ENCODE measurements at regions of chr4 and their contacts with region 1.

Region 1: GRCh38 chr4:110631584-110632505 is 9.0 kb upstream of the PITX2 start:
- DNase-seq: peak; percentile 65
- H3K4me3 Mint-ChIP-seq: peak overlapping the region; percentile 3
- H3K27ac Mint-ChIP-seq: peak overlapping the region; percentile 0
- H3K4me1 Mint-ChIP-seq: peaks cover 22% of the 10 kb centered on the region
- H3K27me3 Mint-ChIP-seq: peaks cover 82% of the 10 kb centered on the region

Region 2: GRCh38 chr4:109631532-109632108 is 1000.2 kb before region 1 on chr4:
- CTCF ChIA-PET with region 1: no interaction called
- intact Hi-C with region 1: no loop called
- DNase-seq: no peak
- H3K4me3 Mint-ChIP-seq: peak overlapping the region; percentile 5
- H3K27ac Mint-ChIP-seq: peak overlapping the region; percentile 69
- H3K4me1 Mint-ChIP-seq: peaks cover 56% of the 10 kb centered on the region
- H3K27me3 Mint-ChIP-seq: no peaks in the 10 kb centered on the region

Region 3: DNA sequence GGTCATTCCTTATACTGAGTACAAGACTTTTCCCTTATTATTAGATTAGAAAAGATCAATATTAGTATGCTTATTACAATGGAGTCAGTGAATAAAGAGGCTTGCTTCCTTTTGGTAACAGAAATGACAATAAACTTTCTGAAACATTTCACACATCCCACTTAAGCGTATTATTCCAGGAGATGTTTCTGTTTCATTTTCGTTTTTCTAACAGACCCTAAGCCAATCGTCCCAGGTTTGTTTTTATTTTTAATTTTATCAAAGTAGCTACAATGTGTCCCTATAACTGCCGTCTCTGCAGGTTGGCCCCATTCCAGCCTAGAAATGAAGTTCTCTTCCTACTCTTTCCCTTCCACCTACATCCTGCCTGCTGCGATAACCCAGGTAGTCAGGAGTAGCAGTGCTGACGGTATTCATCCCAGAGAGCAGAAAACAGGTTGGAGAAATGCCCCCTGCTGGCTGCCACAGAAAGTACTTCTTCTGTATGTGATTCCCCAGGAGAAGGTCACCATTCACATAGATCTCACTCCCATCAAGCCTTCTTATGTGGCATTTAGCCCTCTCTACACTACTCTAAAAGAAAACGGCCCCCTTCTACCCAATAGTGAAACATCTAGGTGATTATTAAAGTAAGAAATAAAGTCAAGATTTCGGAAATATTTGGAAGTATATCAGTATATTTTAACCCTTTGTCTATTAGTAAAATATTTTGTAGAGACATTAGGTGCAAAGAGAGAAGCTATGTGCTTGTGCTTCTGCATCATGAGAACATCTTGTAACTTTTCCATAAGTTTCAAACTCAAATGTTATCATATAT is 115.5 kb before region 1 on chr4:
- CTCF ChIA-PET with region 1: no interaction called
- intact Hi-C with region 1: no loop called
- DNase-seq: peak; percentile 76
- H3K4me3 Mint-ChIP-seq: peak overlapping the region; percentile 79
- H3K27ac Mint-ChIP-seq: no peak overlapping the region
- H3K4me1 Mint-ChIP-seq: peaks cover 9% of the 10 kb centered on the region
- H3K27me3 Mint-ChIP-seq: no peaks in the 10 kb centered on the region

Region 4: DNA sequence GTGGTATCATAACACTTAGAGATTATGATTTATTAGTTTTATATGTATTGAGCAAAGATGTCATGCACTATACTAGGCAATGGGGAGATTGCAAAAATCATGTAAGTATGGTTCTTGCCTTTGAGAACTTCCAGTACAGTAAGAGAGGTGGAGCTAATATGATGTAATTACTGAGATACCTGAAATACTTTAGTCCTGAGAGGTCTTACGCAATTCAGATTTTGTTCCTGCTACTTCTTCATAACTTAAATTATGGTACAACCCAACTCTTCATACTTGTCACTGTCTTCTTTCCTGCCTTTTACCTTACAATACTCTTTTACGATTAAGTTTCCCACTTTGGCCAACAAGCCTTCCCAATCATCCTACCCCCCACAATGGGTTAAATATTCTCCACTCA is 555.3 kb after region 1 on chr4:
- CTCF ChIA-PET with region 1: no interaction called
- intact Hi-C with region 1: no loop called
- DNase-seq: no peak
- H3K4me3 Mint-ChIP-seq: no peak overlapping the region
- H3K27ac Mint-ChIP-seq: no peak overlapping the region
- H3K4me1 Mint-ChIP-seq: no peaks in the 10 kb centered on the region
- H3K27me3 Mint-ChIP-seq: no peaks in the 10 kb centered on the region

Region 5: DNA sequence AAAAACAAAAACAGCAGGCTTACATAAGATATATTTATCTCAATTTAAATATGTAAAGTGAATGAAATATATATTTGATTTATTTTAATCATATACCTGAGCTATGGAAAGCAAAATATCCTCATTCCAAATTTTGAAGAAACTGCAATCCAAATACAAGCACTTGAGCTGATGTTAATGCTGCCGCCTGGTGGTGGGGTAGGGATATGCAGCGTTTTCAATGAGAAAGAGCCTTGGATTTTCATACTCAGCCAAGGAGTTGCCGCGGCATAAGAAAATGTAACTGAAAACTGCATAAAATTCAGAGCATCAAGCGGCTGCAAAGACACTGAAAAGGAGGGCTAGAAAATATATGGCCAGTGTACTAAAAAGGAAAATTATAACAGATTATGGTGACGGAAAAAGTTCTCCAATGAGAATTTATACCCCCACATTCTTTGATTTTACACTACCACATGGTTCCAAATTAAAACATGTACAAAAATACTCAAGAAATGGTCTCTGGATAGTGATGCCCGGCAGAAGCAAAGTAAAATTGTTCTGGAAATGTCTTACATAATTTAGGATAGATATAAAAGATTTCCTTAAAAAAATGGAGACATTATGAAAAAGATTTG is 651.3 kb after region 1 on chr4:
- CTCF ChIA-PET with region 1: no interaction called
- intact Hi-C with region 1: loop called (anchors 1 kb)
- DNase-seq: peak; percentile 64
- H3K4me3 Mint-ChIP-seq: no peak overlapping the region
- H3K27ac Mint-ChIP-seq: no peak overlapping the region
- H3K4me1 Mint-ChIP-seq: no peaks in the 10 kb centered on the region
- H3K27me3 Mint-ChIP-seq: no peaks in the 10 kb centered on the region

Region 6: DNA sequence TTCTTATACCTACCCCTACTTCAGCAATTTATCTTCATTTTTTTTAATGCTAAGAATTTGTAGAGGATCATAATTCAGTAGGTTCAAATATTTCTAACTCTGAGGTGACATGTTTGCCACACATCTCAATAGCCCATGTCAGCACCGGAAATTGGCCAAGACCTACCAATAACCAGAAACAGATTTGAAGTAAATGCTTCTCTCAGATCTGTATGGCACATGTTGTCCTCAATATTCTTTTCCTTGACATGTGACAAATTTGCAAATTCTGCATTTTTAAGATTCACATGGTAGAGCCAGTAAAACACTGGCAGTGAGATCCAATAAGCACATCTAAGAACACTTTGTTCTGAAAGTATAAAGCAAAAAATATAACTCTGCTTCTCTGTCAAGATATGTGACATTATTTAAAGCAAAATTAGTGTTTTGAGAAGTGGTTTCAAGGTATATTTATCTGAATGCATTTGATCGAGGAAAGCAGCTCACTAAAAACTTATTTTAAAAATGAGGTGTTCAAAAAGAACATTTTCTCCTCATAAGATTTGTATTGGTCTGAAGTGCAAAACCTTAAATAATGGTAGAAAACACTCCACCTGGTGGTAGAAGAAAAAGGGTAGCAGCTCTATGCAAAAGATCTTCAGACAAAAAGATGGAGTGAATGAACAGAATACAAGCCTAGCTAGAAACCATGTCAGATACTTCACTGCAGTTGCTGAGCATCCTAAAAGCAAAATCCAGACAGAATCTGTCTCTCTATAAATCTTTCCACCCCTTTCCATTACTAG is 999.6 kb after region 1 on chr4:
- CTCF ChIA-PET with region 1: no interaction called
- intact Hi-C with region 1: loop called (anchors 2 kb)
- DNase-seq: no peak
- H3K4me3 Mint-ChIP-seq: no peak overlapping the region
- H3K27ac Mint-ChIP-seq: no peak overlapping the region
- H3K4me1 Mint-ChIP-seq: no peaks in the 10 kb centered on the region
- H3K27me3 Mint-ChIP-seq: no peaks in the 10 kb centered on the region

Region 7: GRCh38 chr4:111854494-111855087 is 1222.7 kb after region 1 on chr4:
- CTCF ChIA-PET with region 1: no interaction called
- intact Hi-C with region 1: loop called (anchors 2 kb)
- DNase-seq: peak; percentile 40
- H3K4me3 Mint-ChIP-seq: no peak overlapping the region
- H3K27ac Mint-ChIP-seq: no peak overlapping the region
- H3K4me1 Mint-ChIP-seq: no peaks in the 10 kb centered on the region
- H3K27me3 Mint-ChIP-seq: no peaks in the 10 kb centered on the region

Region 8: GRCh38 chr4:112031712-112032328 is 1400.0 kb after region 1 on chr4:
- CTCF ChIA-PET with region 1: no interaction called
- intact Hi-C with region 1: loop called (anchors 5 kb)
- DNase-seq: peak; percentile 13
- H3K4me3 Mint-ChIP-seq: no peak overlapping the region
- H3K27ac Mint-ChIP-seq: no peak overlapping the region
- H3K4me1 Mint-ChIP-seq: no peaks in the 10 kb centered on the region
- H3K27me3 Mint-ChIP-seq: peaks cover 16% of the 10 kb centered on the region